Breast epithelium (tissue), 4 donors: ENCODE measurements at regions of chr18 and their contacts with region 1.

Region 1: GRCh38 chr18:33694593-33694992 is 116.6 kb downstream of the ASXL3 start:
- DNase-seq: no peak
- H3K4me3 ChIP-seq: no peak overlapping the region
- H3K27ac ChIP-seq: no peak overlapping the region
- H3K4me1 ChIP-seq: no peaks in the 10 kb centered on the region
- H3K27me3 ChIP-seq: no peaks in the 10 kb centered on the region
- CTCF ChIP-seq: no peak
- POLR2A ChIP-seq: no peak

Region 2: GRCh38 chr18:33682436-33682835 is 12.2 kb before region 1 on chr18:
- intact Hi-C with region 1: loop called (anchors 1 kb)
- DNase-seq: no peak
- H3K4me3 ChIP-seq: no peak overlapping the region
- H3K27ac ChIP-seq: no peak overlapping the region
- H3K4me1 ChIP-seq: no peaks in the 10 kb centered on the region
- H3K27me3 ChIP-seq: no peaks in the 10 kb centered on the region
- CTCF ChIP-seq: no peak
- POLR2A ChIP-seq: no peak